Heart right ventricle (tissue), 16 donors: ENCODE measurements at regions of chr7 and their contacts with region 1.

Region 1: GRCh38 chr7:55132890-55133551 is 114.2 kb downstream of the EGFR start:
- DNase-seq: no peak
- ATAC-seq: peak in 6 of 8 donors; percentile 1 to 27 (median 21)
- H3K4me3 ChIP-seq: no peak overlapping the region
- H3K27ac ChIP-seq: peak overlapping the region; percentile 45 to 88 (median 78)
- H3K4me1 ChIP-seq: peaks cover 22 to 68% (median 57%) of the 10 kb centered on the region in 9 donors
- H3K27me3 ChIP-seq: no peaks in the 10 kb centered on the region
- CTCF ChIP-seq: no peak

Region 2: GRCh38 chr7:55073945-55074499 is 59.0 kb before region 1 on chr7:
- intact Hi-C with region 1: loop called in 1 of 10 experiments (anchors 5 kb)
- DNase-seq: peak in 1 of 2 donors; percentile 38
- ATAC-seq: peak; percentile 47 to 88 (median 78)
- H3K4me3 ChIP-seq: peak overlapping the region in 7 of 10 donors; percentile 0 to 35 (median 25)
- H3K27ac ChIP-seq: peak overlapping the region; percentile 6 to 77 (median 42)
- H3K4me1 ChIP-seq: peaks cover 9 to 50% (median 32%) of the 10 kb centered on the region in 9 donors
- H3K27me3 ChIP-seq: no peaks in the 10 kb centered on the region
- CTCF ChIP-seq: no peak

Region 3: DNA sequence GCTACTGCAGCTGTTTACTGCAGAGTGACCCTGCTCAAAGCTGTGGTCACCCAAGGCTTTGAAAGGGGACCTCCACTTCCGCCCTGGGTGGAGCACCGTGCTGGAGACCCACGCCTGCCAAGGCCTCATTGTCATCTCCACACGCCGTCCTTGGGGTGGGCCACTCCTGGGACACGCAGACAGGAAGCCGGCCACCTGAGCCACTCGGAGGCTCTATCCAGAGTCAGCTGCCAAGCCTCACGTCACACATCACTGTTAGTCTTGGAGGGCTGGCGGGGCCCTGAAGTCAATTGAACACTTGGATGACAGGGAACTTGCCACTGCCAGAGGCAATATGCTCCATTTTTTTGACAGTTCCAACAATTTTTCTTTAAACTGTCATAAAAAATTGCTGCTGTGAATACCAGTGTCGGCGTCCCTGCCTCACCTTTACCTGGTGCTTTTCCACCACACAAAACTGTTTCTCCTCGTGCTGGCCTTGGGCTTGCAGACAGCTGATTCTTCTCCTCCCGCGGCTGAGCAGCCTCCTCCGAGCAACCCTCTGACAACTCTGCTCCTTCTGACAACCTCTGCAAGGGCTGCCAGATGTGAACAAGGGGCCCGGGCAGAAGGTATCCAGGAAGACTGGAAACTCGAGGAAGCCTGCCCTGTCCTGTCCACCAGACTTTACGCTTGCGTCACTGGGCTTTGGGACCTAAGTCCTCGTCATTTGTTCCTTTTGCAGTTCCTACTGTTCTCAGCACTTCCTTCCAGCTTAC is 32.3 kb before region 1 on chr7:
- intact Hi-C with region 1: loop called in 1 of 10 experiments (anchors 5 kb)
- DNase-seq: peak; percentile 83 to 92
- ATAC-seq: peak; percentile 84 to 91 (median 88)
- H3K4me3 ChIP-seq: peak overlapping the region in 1 of 10 donors; percentile 2
- H3K27ac ChIP-seq: peak overlapping the region in 9 of 10 donors; percentile 50 to 87 (median 73)
- H3K4me1 ChIP-seq: peaks cover 8 to 70% (median 28%) of the 10 kb centered on the region in 9 donors
- H3K27me3 ChIP-seq: no peaks in the 10 kb centered on the region
- CTCF ChIP-seq: no peak

Region 4: GRCh38 chr7:55185941-55186609 is 53.1 kb after region 1 on chr7:
- intact Hi-C with region 1: loop called in 1 of 10 experiments (anchors 5 kb)
- DNase-seq: no peak
- ATAC-seq: peak in 1 of 8 donors; percentile 75
- H3K4me3 ChIP-seq: no peak overlapping the region
- H3K27ac ChIP-seq: peak overlapping the region in 1 of 10 donors; percentile 31
- H3K4me1 ChIP-seq: peaks cover 13 to 39% (median 22%) of the 10 kb centered on the region in 9 donors
- H3K27me3 ChIP-seq: no peaks in the 10 kb centered on the region
- CTCF ChIP-seq: no peak

Region 5: DNA sequence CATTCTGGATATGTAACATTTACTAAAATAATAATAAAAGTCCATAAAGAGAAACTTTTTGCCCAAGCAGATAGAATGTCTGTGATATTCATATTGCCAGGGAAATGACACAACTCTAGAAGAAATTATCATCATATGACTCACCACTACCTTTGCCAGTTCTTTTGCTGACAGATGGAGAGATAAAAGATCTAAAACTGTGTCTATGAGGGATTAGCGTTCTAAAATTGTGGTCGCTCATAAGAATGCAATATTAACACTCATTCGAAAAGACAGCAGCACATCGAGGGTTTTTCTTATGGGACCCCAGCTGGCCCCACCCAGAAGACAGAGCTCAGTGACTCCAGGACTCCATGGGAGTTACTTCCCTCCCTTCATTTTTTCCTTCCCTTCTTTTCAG is 215.5 kb after region 1 on chr7:
- intact Hi-C with region 1: no loop called
- DNase-seq: no peak
- ATAC-seq: no peak
- H3K4me3 ChIP-seq: no peak overlapping the region
- H3K27ac ChIP-seq: no peak overlapping the region
- H3K4me1 ChIP-seq: no peaks in the 10 kb centered on the region
- H3K27me3 ChIP-seq: peaks cover 0 to 26% (median 14%) of the 10 kb centered on the region in 7 donors
- CTCF ChIP-seq: no peak

Region 6: DNA sequence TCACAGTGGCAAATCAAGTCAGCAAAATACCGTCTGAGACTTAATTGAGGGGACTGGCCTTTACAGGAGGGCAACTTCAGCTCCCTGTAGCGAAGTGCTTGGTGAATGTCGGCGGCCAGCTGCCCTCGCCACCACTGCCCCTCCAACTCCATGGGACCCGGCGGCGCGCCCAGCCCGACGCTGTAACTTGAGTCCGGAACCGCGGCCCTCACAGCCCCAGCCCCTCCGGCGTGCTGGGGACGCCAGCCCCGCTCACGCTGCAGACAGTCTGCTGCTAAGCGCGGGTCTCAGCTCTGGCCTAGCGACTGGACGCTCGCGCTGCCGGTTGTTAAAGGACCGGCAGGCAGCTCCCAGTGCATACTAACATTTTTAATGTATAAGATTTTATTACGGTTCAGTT is 1096.6 kb after region 1 on chr7:
- intact Hi-C with region 1: no loop called
- DNase-seq: no peak
- ATAC-seq: no peak
- H3K4me3 ChIP-seq: no peak overlapping the region
- H3K27ac ChIP-seq: no peak overlapping the region
- H3K4me1 ChIP-seq: no peaks in the 10 kb centered on the region
- H3K27me3 ChIP-seq: peaks cover 0 to 22% (median 8%) of the 10 kb centered on the region in 7 donors
- CTCF ChIP-seq: no peak